Endothelial cell of umbilical vein (primary cell): ENCODE measurements at regions of chr20 and their contacts with region 1.

Region 1: DNA sequence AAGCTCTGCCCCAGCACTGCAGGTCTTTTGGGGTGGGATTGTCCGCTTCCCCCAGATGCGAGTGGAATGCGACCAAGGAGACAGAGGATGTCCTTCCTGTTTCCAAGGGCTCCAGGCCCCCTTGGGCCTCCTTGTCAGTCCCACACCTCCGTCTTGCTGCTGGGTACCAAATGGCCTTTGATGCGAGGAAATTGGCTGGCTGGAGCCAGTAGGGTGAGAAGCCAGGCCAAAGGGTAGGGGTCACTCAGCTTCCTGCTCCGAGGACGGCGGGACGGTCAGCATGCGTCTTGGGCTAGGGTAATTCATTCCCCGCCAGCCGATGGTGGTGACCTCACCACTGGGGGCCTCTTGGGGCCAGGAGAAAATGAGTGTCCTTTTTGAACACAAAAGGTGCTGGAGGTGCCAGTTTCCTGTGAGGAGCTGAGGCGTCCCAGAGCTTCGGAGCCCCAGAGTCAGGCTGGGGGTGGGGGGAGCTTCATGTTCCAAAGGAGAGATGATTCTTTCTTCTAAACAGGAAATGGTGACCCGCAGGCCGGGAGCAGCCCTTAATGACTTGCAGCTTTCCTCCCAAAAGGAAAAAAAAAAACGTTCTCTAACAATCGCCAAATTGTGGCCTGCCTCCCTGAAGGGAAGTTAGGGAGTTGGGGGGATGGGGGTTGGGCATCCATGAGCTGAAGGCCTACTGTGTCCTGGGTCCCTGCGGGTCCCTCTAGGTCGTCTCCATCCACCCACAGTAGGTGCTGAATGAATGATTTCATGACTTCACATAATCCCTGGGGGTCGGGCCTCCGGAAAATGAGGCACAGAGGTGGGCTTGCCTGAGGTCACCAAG is 6.7 kb downstream of the SNAI1 start:
- DNase-seq: peak; percentile 71
- H3K4me3 ChIP-seq: no peak overlapping the region
- H3K27ac ChIP-seq: peak overlapping the region; percentile 94
- H3K4me1 ChIP-seq: peaks cover 59% of the 10 kb centered on the region
- H3K27me3 ChIP-seq: no peaks in the 10 kb centered on the region
- CTCF ChIP-seq: no peak
- POLR2A ChIP-seq: no peak

Region 2: GRCh38 chr20:49925901-49926454 is 63.5 kb before region 1 on chr20:
- CTCF ChIA-PET with region 1: no interaction called
- POLR2A ChIA-PET with region 1: no interaction called
- dilution Hi-C with region 1: no loop called
- intact Hi-C with region 1: no loop called
- DNase-seq: no peak
- H3K4me3 ChIP-seq: no peak overlapping the region
- H3K27ac ChIP-seq: no peak overlapping the region
- H3K4me1 ChIP-seq: peaks cover 3% of the 10 kb centered on the region
- H3K27me3 ChIP-seq: no peaks in the 10 kb centered on the region
- CTCF ChIP-seq: no peak
- POLR2A ChIP-seq: no peak

Region 3: DNA sequence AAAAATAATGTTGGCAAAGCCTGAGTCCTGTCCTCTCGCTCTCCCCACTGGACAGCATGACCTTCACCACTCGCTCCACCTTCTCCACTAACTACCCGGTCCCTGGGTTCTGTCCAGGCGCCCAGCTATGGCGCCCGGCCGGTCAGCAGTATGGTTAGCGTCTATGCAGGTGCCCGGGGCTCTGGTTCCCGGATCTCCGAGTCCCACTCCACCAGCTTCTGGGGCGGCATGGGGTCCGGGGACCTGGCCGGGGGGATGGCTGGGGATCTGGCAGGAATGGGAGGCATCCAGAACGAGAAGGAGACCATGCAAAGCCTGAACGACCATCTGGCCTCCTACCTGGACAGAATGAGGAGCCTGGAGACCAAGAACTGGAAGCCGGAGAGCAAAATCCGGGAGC is 32.8 kb before region 1 on chr20:
- CTCF ChIA-PET with region 1: no interaction called
- POLR2A ChIA-PET with region 1: no interaction called
- dilution Hi-C with region 1: no loop called
- intact Hi-C with region 1: no loop called
- DNase-seq: no peak
- H3K4me3 ChIP-seq: no peak overlapping the region
- H3K27ac ChIP-seq: no peak overlapping the region
- H3K4me1 ChIP-seq: no peaks in the 10 kb centered on the region
- H3K27me3 ChIP-seq: no peaks in the 10 kb centered on the region
- CTCF ChIP-seq: no peak
- POLR2A ChIP-seq: no peak

Region 4: DNA sequence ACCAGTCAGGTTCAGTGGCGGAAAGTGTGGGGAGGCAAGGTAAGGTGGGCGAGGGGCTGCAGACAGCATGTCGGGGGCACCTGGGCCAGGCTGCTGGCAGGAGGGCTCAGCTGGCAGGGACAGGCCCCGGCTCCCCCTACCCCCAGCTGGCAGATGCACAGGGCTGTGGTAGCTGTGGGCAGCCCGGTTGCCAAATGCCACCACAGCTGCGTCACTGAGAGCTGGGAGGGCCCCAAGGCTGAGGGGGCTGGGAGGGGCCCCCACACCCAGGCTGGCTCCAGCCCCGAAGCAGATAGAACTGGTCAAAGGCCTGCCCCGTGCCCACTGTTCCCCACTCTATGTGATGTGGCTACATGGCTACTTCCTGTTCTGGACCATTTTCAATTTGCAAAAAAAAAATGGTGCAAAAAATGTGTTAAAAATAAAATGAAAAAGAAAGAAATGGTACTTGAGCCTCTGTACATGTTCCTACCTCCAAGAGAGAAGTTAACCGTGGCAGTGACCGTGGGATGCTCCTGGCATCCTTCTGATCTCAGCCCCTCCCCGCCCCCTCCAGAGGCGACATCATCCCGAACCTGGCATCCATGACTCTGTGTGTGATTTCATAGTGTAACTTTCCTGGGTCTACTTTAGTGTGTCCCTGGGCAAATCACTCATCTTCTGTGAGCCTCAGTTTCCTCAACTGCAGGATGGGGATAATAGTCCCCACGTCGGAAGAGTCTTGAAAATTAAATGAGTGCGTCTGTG is 59.1 kb after region 1 on chr20:
- CTCF ChIA-PET with region 1: interaction called, 4 read pairs
- POLR2A ChIA-PET with region 1: interaction called, 8 read pairs
- dilution Hi-C with region 1: no loop called
- intact Hi-C with region 1: loop called (anchors 1 kb)
- DNase-seq: no peak
- H3K4me3 ChIP-seq: no peak overlapping the region
- H3K27ac ChIP-seq: peak overlapping the region; percentile 96
- H3K4me1 ChIP-seq: peaks cover 26% of the 10 kb centered on the region
- H3K27me3 ChIP-seq: no peaks in the 10 kb centered on the region
- CTCF ChIP-seq: no peak
- POLR2A ChIP-seq: no peak